GM12878 (cell line): ENCODE measurements at regions of chr17 and their contacts with region 1.

Region 1: DNA sequence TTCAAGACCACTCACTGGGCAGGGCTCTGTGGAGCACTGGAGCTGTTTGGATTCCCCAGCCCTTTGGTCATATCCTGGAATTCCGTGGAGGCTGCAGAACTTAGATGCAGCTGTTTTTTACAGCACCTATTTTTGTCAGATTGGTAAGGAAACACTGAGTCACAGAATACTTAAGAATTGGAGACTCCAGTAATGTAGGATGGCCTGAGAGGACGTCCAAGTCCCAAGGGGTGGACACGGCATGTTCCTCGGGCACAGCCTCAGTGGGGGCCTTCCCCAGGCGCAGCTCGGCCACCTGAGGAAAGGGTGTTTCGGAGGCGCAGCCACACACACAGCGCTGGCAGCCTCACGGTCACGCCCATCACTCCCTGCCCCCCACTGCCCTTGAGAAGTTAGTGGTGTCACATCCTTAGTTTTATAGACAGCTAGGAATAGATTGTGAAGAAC is 14.8 kb downstream of the PLD6 start:
- DNase-seq: no peak
- ATAC-seq: no peak
- H3K4me3 ChIP-seq: no peak overlapping the region
- H3K27ac ChIP-seq: no peak overlapping the region
- H3K4me1 ChIP-seq: peaks cover 12% of the 10 kb centered on the region
- H3K27me3 ChIP-seq: no peaks in the 10 kb centered on the region
- CTCF ChIP-seq: no peak
- EP300 ChIP-seq: no peak
- POLR2A ChIP-seq: no peak
- RAD21 ChIP-seq: no peak

Region 2: DNA sequence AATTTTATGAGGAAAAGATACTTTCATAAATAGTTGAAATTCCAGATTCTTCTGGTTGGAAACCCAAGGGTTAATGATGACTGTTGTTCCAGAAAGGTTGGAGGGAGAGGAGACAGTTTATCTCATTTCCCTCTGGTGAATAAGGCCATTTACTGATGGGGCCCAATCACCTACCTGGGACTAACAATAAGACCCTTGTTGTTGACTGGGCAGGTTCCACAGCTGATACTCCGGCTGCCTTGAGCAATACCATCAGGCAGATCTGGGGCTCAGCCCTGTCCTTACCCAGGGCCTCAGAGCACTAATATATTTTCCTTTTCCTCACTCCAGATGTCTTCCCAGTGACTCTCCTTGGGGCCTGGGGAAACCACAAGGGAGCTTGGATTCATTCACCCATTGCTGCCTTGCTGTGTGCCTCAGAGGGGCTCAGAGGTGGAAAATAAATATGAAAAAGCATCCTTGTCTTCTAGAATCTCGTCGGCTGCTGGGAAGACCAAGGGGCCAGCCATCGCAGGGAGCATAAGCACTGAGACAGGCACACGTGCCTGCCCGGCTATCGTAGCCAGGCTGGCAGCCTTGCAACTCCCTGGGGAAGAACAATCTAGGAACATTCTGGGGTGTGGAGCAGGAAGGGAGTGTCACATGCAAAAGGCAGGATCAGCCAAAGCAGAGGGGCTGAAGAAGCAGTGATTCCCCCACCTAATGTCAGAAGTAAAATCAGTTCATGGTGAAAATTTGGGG is 94.8 kb before region 1 on chr17:
- CTCF ChIA-PET with region 1: no interaction called
- POLR2A ChIA-PET with region 1: no interaction called
- RAD21 ChIA-PET with region 1: no interaction called
- SMC1A ChIA-PET with region 1: no interaction called
- in situ Hi-C with region 1: no loop called
- intact Hi-C with region 1: no loop called
- DNase-seq: no peak
- ATAC-seq: no peak
- H3K4me3 ChIP-seq: no peak overlapping the region
- H3K27ac ChIP-seq: no peak overlapping the region
- H3K4me1 ChIP-seq: no peaks in the 10 kb centered on the region
- H3K27me3 ChIP-seq: no peaks in the 10 kb centered on the region
- CTCF ChIP-seq: no peak
- EP300 ChIP-seq: no peak
- POLR2A ChIP-seq: no peak
- RAD21 ChIP-seq: no peak

Region 3: DNA sequence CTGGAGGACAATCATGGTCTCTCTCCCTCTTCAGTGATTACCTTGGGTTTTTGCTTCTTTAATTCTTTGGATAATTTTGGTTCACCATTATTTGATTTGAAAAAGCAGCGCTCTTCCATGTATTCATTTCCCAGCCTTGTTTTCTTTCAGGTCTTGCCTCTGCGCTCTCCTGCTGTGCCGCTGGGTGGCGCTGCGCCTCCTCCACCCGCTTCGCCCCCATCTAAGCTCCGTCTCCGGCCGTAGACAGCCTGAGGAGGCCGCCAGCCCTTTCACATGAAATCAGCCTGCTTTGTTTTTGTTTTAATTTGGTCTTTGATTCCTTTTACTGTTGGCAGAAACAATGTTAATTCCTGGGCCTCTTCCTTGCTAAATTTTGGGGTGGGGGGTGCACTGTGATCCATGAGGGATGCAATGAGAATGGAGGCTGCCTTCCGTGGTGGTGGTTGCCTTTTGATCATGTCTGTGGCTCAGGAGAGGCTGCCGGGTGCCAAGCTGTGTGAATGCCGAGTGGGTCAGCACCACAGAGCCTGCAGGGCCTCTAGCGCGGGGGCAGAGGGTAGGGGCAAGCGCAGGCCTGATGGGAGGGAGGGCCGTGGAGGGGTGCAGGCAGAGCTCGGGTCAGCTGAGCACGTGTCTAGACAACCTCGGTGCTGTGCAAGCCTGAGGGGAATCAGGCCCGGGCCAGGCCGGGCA is 49.4 kb before region 1 on chr17:
- CTCF ChIA-PET with region 1: interaction called, 3 read pairs
- POLR2A ChIA-PET with region 1: no interaction called
- RAD21 ChIA-PET with region 1: no interaction called
- SMC1A ChIA-PET with region 1: interaction called, 4 read pairs
- in situ Hi-C with region 1: no loop called
- intact Hi-C with region 1: loop called (anchors 5 kb)
- DNase-seq: no peak
- ATAC-seq: peak; percentile 62
- H3K4me3 ChIP-seq: no peak overlapping the region
- H3K27ac ChIP-seq: no peak overlapping the region
- H3K4me1 ChIP-seq: no peaks in the 10 kb centered on the region; the same call in 1 of the 2 replicates
- H3K27me3 ChIP-seq: no peaks in the 10 kb centered on the region
- CTCF ChIP-seq: peak; percentile 62 to 81 (median 73)
- EP300 ChIP-seq: no peak
- POLR2A ChIP-seq: no peak
- RAD21 ChIP-seq: peak; percentile 73